Activated CD4-positive, alpha-beta T cell treated with anti-CD3 and anti-CD28 coated beads, Interleukin-2, amount 10 ng/mL, durations not matched to agents 24 days and 14 days (primary cell): ENCODE measurements at regions of chr7 and their contacts with region 1.

Region 1: GRCh38 chr7:35694781-35695472 is at the start of gene HERPUD2:
- DNase-seq: peak; percentile 97
- H3K4me3 Mint-ChIP-seq: peak within 1 kb of the TSS; percentile 94
- H3K27ac Mint-ChIP-seq: peak within 1 kb of the TSS; percentile 97
- H3K4me1 Mint-ChIP-seq: peaks cover 48% of the 10 kb centered on the region
- H3K27me3 Mint-ChIP-seq: no peaks in the 10 kb centered on the region
- total RNA-seq, gene HERPUD2: 20.3 and 20.4 TPM in 2 replicates

Region 2: GRCh38 chr7:35037526-35038339 is 657.2 kb before region 1 on chr7:
- intact Hi-C with region 1: loop called (anchors 2 kb)
- DNase-seq: peak; percentile 97
- H3K4me3 Mint-ChIP-seq: peak overlapping the region; percentile 86
- H3K27ac Mint-ChIP-seq: peak overlapping the region; percentile 78
- H3K4me1 Mint-ChIP-seq: peaks cover 24% of the 10 kb centered on the region
- H3K27me3 Mint-ChIP-seq: peaks cover 27% of the 10 kb centered on the region

Region 3: DNA sequence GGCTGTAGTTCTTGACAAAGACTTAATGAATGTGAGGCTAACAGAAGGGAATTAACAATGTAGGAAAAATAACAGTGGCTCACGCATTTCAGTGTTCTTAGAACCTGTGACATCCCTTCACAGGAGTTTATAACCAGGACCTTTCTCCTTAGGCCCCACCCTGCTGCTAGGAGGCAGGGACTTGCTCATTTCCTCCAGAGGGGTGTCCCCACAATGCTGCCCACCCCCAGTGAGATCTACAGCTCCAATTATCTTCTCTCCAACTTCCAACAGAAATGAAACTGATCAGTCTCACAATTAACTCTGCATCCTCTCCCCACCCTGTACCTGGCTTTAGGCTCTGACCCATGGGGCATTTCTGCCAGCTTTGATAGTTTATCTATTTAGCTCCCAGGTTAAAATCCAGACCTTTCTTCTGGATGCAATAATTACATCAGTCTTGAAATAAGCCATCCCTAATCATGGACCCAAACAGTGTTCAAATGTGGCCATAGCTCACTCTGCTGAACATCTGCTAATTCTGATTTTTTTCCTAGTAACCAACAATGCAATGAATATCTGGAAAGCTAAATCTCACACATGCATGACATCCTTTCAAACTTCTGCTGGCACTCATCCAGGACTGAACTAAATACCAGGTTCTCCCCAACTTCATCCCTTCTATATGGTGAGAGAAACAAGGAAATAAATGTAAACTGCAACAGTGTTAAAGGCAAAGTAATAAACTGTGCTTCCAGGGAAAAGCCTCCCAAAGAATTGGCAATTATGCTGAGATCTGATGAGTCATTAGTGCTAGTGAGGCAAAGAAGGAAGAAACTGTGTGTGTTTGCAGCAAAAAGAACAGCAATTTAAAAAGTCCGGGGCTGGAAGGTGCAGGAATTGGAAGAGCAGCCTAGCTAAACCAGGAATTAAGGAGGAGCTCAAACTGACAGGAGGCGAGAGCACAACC is 64.6 kb before region 1 on chr7:
- intact Hi-C with region 1: no loop called
- DNase-seq: peak; percentile 51
- H3K4me3 Mint-ChIP-seq: no peak overlapping the region
- H3K27ac Mint-ChIP-seq: no peak overlapping the region
- H3K4me1 Mint-ChIP-seq: no peaks in the 10 kb centered on the region
- H3K27me3 Mint-ChIP-seq: no peaks in the 10 kb centered on the region

Region 4: DNA sequence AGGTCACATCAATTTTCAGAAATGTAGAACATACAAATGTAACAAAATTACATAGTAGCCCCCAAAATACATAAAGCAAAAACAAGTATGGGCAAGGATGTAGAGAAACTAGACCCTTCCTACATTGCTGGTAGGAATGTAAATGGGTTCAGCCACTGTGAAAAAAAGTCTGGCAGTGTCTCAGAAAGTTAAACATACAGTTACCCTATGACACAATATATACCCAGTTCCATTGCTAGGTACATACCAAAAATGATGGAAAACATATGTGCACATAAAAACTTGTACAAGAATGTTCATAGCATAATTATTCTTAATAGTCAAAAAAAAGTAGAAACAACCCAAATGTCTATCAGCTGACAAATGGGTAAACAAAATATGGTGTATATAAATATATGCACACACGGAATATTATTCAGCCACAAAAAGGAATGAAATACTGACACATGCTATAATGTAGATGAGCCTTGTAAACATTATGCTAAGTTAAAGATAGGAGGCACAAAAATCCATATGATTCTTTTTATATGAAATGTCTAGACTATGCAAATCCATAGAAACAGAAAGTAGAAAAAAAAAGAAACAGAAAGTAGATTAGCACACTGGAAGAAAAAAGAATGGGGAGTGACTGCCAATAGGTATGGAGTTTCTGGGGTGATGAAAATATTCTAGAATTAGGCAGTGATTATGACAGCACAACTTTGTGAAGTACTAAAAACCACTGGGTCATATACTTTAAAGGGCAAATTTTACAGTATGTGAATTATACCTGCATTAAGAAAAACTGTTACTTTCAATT is 13.5 kb before region 1 on chr7:
- intact Hi-C with region 1: loop called (anchors 1 kb)
- DNase-seq: no peak
- H3K4me3 Mint-ChIP-seq: peak overlapping the region; percentile 36
- H3K27ac Mint-ChIP-seq: peak overlapping the region; percentile 21
- H3K4me1 Mint-ChIP-seq: peaks cover 39% of the 10 kb centered on the region
- H3K27me3 Mint-ChIP-seq: no peaks in the 10 kb centered on the region

Region 5: DNA sequence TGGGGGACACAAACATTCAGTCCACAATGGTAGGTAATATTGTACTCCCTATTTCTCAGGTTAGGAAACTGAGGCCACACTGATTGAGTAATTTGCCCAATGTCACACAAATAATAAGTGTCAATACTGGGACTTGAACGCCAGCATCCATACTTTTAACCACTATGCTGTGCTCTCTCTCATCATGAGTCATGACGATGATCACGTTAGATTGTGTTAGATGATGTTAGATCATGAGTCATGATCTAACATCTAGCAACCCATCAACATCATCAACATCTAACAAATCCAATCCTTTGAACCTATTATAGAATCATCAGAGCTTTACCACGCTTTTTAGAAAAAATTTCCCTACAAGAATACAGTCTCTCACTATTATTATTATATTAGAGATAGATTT is 28.1 kb after region 1 on chr7:
- intact Hi-C with region 1: loop called (anchors 1 kb)
- DNase-seq: no peak
- H3K4me3 Mint-ChIP-seq: peak overlapping the region; percentile 40
- H3K27ac Mint-ChIP-seq: peak overlapping the region; percentile 61
- H3K4me1 Mint-ChIP-seq: peaks cover 30% of the 10 kb centered on the region
- H3K27me3 Mint-ChIP-seq: peaks cover 12% of the 10 kb centered on the region

Region 6: GRCh38 chr7:35801392-35802101 is 106.6 kb after region 1 on chr7:
- intact Hi-C with region 1: loop called (anchors 1 kb)
- DNase-seq: peak; percentile 92
- H3K4me3 Mint-ChIP-seq: peak overlapping the region; percentile 100
- H3K27ac Mint-ChIP-seq: peak overlapping the region; percentile 98
- H3K4me1 Mint-ChIP-seq: peaks cover 38% of the 10 kb centered on the region
- H3K27me3 Mint-ChIP-seq: no peaks in the 10 kb centered on the region

Region 7: GRCh38 chr7:36152756-36153570 is 458.0 kb after region 1 on chr7 and contains the start of gene EEPD1:
- intact Hi-C with region 1: loop called (anchors 1 kb)
- DNase-seq: peak; percentile 100
- H3K4me3 Mint-ChIP-seq: peak within 1 kb of the TSS; percentile 82
- H3K27ac Mint-ChIP-seq: peak within 1 kb of the TSS; percentile 46
- H3K4me1 Mint-ChIP-seq: peaks cover 17% of the 10 kb centered on the region
- H3K27me3 Mint-ChIP-seq: peaks cover 10% of the 10 kb centered on the region
- total RNA-seq, gene EEPD1: 0.61 and 0.71 TPM in 2 replicates